Left ventricle myocardium superior (tissue), 1 donor: ENCODE measurements at regions of chr2 and their contacts with region 1.

Region 1: GRCh38 chr2:39379643-39380524 is 57.2 kb downstream of the MAP4K3 start:
- DNase-seq: no peak
- ATAC-seq: peak; percentile 82

Region 2: GRCh38 chr2:39436592-39437510 is 57.0 kb after region 1 on chr2 and contains the start of gene MAP4K3:
- intact Hi-C with region 1: loop called (anchors 5 kb)
- DNase-seq: peak; percentile 94
- ATAC-seq: peak; percentile 91
- total RNA-seq, gene MAP4K3: 31.4 TPM

Region 3: DNA sequence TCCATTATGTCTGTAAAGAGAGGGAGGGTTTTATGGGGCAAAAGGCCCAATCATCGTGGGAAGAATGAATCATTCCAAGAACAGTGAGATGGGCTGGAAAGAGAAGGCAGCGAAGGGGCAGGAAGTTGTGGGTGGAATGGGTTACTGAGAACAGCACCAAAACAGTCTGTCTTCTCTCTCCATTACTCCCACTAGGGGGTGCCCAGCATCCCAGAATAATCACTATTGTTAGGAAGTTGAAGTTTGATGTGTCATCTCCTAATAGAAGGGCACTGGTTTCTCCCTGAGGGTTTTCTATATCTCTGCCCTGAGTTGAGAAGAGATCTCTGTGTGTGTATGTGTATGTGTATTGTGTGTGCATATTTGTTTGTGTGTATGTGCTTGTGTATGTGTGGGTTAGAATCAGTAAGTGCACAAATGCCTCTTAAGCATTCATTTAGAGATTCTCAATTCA is 133.8 kb after region 1 on chr2:
- intact Hi-C with region 1: loop called (anchors 10 kb)
- DNase-seq: no peak
- ATAC-seq: peak; percentile 47